Activated CD8-positive, alpha-beta T cell treated with anti-CD3 and anti-CD28 coated beads for 36 hours (primary cell): ENCODE measurements at regions of chr5 and their contacts with region 1.

Region 1: GRCh38 chr5:154754460-154755360 is 467 bp upstream of the LARP1 start:
- DNase-seq: peak; percentile 100
- ATAC-seq: peak; percentile 91
- H3K4me3 Mint-ChIP-seq: peak overlapping the region; percentile 97
- H3K27ac Mint-ChIP-seq: peak overlapping the region; percentile 99
- H3K4me1 Mint-ChIP-seq: peaks cover 35% of the 10 kb centered on the region
- H3K27me3 Mint-ChIP-seq: no peaks in the 10 kb centered on the region
- CTCF ChIP-seq: peak; percentile 32

Region 2: DNA sequence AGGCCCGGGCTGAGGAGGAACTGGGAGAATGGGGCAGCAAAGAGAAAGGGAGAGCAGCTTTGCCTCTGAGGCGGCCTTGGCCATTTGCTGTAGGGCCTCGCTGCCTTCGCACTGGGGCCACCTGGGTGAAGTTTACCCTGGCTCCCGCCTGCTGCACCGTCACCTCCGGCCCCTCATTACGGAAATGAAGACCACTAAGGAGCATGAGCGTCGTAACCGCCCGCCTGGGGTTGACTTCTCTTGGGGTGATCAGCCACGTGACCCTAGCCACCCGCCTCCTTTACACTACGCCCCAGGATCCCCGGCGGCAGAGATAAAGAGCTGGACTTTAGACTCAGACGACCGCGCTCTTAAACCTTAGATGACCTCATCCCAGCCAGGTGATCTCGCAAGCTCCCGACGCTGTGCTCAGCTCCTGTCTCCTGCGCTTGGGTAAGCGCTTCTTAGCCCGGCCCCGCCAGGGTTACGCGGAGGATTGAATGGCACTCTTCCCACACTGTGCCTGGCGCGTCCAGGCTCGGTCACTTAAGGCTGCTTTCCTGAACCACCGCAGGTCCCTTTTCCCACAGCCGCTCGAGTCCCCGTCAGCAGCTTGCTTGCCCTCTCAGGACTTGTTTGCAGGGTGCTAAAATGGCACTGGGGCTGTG is 107.5 kb before region 1 on chr5:
- CTCF ChIA-PET with region 1: interaction called, 12 read pairs
- POLR2A ChIA-PET with region 1: no interaction called
- intact Hi-C with region 1: loop called (anchors 2 kb)
- DNase-seq: peak; percentile 64
- ATAC-seq: peak; percentile 72
- H3K4me3 Mint-ChIP-seq: peak overlapping the region; percentile 62
- H3K27ac Mint-ChIP-seq: peak overlapping the region; percentile 36
- H3K4me1 Mint-ChIP-seq: peaks cover 13% of the 10 kb centered on the region
- H3K27me3 Mint-ChIP-seq: no peaks in the 10 kb centered on the region
- CTCF ChIP-seq: no peak

Region 3: GRCh38 chr5:154654486-154655371 is 100.0 kb before region 1 on chr5:
- CTCF ChIA-PET with region 1: interaction called, 12 read pairs
- POLR2A ChIA-PET with region 1: no interaction called
- intact Hi-C with region 1: loop called (anchors 2 kb)
- DNase-seq: no peak
- ATAC-seq: no peak
- H3K4me3 Mint-ChIP-seq: no peak overlapping the region
- H3K27ac Mint-ChIP-seq: no peak overlapping the region
- H3K4me1 Mint-ChIP-seq: peaks cover 8% of the 10 kb centered on the region
- H3K27me3 Mint-ChIP-seq: no peaks in the 10 kb centered on the region
- CTCF ChIP-seq: no peak

Region 4: DNA sequence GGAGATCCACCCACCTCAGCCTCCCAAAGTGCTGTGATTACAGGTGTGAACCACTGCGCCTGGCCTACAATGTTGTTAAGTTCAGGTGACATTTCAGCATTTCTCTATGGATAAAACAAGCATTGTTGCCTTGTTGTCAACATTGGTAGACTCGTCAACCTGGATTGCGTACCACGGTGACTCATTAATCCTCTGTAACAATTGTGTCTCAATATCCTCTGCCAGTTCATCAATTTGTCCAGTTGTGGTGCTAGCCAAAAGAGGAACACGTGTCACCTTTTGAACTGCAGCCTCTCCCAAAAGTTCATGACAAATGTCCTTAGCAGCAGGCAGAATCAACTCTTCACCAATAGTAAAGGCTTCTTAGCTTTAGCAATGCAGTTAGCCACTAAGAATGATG is 45.9 kb before region 1 on chr5:
- CTCF ChIA-PET with region 1: no interaction called
- POLR2A ChIA-PET with region 1: no interaction called
- intact Hi-C with region 1: no loop called
- DNase-seq: no peak
- ATAC-seq: no peak
- H3K4me3 Mint-ChIP-seq: no peak overlapping the region
- H3K27ac Mint-ChIP-seq: no peak overlapping the region
- H3K4me1 Mint-ChIP-seq: peaks cover 2% of the 10 kb centered on the region
- H3K27me3 Mint-ChIP-seq: no peaks in the 10 kb centered on the region
- CTCF ChIP-seq: no peak

Region 5: GRCh38 chr5:154771383-154771901 is 16.7 kb after region 1 on chr5:
- CTCF ChIA-PET with region 1: interaction called, 6 read pairs
- POLR2A ChIA-PET with region 1: interaction called, 12 read pairs
- intact Hi-C with region 1: no loop called
- DNase-seq: no peak
- ATAC-seq: no peak
- H3K4me3 Mint-ChIP-seq: no peak overlapping the region
- H3K27ac Mint-ChIP-seq: peak overlapping the region; percentile 3
- H3K4me1 Mint-ChIP-seq: peaks cover 76% of the 10 kb centered on the region
- H3K27me3 Mint-ChIP-seq: no peaks in the 10 kb centered on the region
- CTCF ChIP-seq: no peak

Region 6: GRCh38 chr5:154857530-154858296 is 103.0 kb after region 1 on chr5:
- CTCF ChIA-PET with region 1: no interaction called
- POLR2A ChIA-PET with region 1: interaction called, 3 read pairs
- intact Hi-C with region 1: loop called (anchors 2 kb)
- DNase-seq: peak; percentile 90
- ATAC-seq: peak; percentile 59
- H3K4me3 Mint-ChIP-seq: peak overlapping the region; percentile 100
- H3K27ac Mint-ChIP-seq: peak overlapping the region; percentile 96
- H3K4me1 Mint-ChIP-seq: peaks cover 28% of the 10 kb centered on the region
- H3K27me3 Mint-ChIP-seq: no peaks in the 10 kb centered on the region
- CTCF ChIP-seq: no peak